GM12878 (cell line): ENCODE measurements at regions of chr9 and their contacts with region 1.

Region 1: GRCh38 chr9:124291801-124292396 is 34.1 kb downstream of the NEK6 start:
- DNase-seq: peak; percentile 77
- ATAC-seq: peak; percentile 67
- H3K4me3 ChIP-seq: peak overlapping the region; percentile 56
- H3K27ac ChIP-seq: peak overlapping the region; percentile 91
- H3K4me1 ChIP-seq: peaks cover 90% of the 10 kb centered on the region
- H3K27me3 ChIP-seq: no peaks in the 10 kb centered on the region
- CTCF ChIP-seq: peak; percentile 18 to 41 (median 21); a peak in 3 of 6 replicates
- EP300 ChIP-seq: peak; percentile 45 to 68; a peak in 3 of 4 replicates
- POLR2A ChIP-seq: peak; percentile 45
- RAD21 ChIP-seq: no peak

Region 2: DNA sequence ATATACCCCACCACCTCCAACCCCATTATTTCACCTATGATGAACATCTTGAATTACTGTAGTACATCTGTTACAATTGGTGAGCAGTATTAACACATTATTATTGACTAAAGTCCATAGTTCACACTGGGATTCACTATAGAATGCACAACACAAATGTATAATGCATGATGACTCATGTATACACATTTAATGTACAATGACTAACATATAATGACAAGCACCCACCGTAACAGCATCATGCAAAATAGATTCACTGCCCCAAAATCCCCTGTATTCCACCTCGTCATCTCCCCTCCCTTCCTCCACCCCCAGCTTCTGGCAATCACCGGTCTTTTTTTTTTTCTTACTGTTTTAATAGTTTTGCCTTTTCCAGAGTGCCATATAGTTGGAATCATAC is 81.2 kb before region 1 on chr9:
- CTCF ChIA-PET with region 1: interaction called, 24 read pairs
- POLR2A ChIA-PET with region 1: interaction called, 4 read pairs
- RAD21 ChIA-PET with region 1: interaction called, 38 read pairs
- SMC1A ChIA-PET with region 1: interaction called, 56 read pairs
- in situ Hi-C with region 1: no loop called
- intact Hi-C with region 1: no loop called
- DNase-seq: peak; percentile 69
- ATAC-seq: peak; percentile 87
- H3K4me3 ChIP-seq: no peak overlapping the region
- H3K27ac ChIP-seq: peak overlapping the region; percentile 57
- H3K4me1 ChIP-seq: peaks cover 72% of the 10 kb centered on the region
- H3K27me3 ChIP-seq: no peaks in the 10 kb centered on the region
- CTCF ChIP-seq: no peak
- EP300 ChIP-seq: peak; percentile 55 to 81; a peak in 2 of 4 replicates
- POLR2A ChIP-seq: no peak
- RAD21 ChIP-seq: no peak; the same call in 1 of the 2 replicates

Region 3: GRCh38 chr9:124257844-124258606 is 33.9 kb before region 1 on chr9 and contains the start of gene NEK6:
- CTCF ChIA-PET with region 1: interaction called, 11 read pairs
- POLR2A ChIA-PET with region 1: interaction called, 45 read pairs
- RAD21 ChIA-PET with region 1: interaction called, 74 read pairs
- SMC1A ChIA-PET with region 1: interaction called, 132 read pairs
- in situ Hi-C with region 1: no loop called
- intact Hi-C with region 1: no loop called
- DNase-seq: no peak
- ATAC-seq: peak; percentile 2
- H3K4me3 ChIP-seq: peak within 1 kb of the TSS; percentile 95
- H3K27ac ChIP-seq: peak within 1 kb of the TSS; percentile 88
- H3K4me1 ChIP-seq: peaks cover 35% of the 10 kb centered on the region
- H3K27me3 ChIP-seq: no peaks in the 10 kb centered on the region
- CTCF ChIP-seq: no peak
- EP300 ChIP-seq: no peak
- POLR2A ChIP-seq: peak; percentile 72
- RAD21 ChIP-seq: no peak
- polyA plus RNA-seq, gene NEK6: 31.3 to 33.2 TPM

Region 4: DNA sequence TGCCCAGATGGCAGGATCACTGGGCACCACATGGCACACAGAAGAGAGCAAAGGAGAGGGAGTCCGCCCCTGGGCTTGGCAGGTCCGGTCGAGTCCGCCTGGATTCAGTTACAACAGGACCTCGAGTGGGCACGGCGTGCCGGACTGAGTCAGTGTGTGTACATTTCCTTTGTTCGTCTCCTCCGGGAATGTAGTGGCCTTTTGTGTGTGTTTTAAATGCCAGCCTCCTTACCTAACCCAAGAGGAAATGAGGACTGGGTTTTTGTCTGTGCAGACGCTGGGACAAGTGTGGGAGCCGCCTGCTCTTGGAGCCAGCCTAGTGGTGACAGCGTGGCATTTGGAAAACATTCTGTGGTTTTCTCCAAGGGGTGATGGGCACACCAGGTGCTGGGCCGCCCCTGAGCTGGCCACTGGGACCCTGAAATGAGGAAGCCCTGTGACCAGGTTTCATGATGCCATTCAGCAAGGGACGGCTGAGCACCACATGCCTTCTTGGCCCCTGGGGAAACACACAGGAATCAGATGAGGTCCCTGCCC is 24.6 kb before region 1 on chr9:
- CTCF ChIA-PET with region 1: interaction called, 11 read pairs
- POLR2A ChIA-PET with region 1: interaction called, 45 read pairs
- RAD21 ChIA-PET with region 1: interaction called, 74 read pairs
- SMC1A ChIA-PET with region 1: interaction called, 132 read pairs
- in situ Hi-C with region 1: no loop called
- intact Hi-C with region 1: loop called (anchors 1 kb)
- DNase-seq: no peak
- ATAC-seq: peak; percentile 8
- H3K4me3 ChIP-seq: peak overlapping the region; percentile 61; the same call in 1 of the 2 replicates
- H3K27ac ChIP-seq: peak overlapping the region; percentile 7
- H3K4me1 ChIP-seq: peaks cover 44% of the 10 kb centered on the region
- H3K27me3 ChIP-seq: no peaks in the 10 kb centered on the region
- CTCF ChIP-seq: 0 out of 6 replicates have a peak, but pooled peaks of 1 of the 3 experiments have one; percentile 8
- EP300 ChIP-seq: no peak
- POLR2A ChIP-seq: peak; percentile 18
- RAD21 ChIP-seq: no peak